Left ventricle myocardium superior (tissue), 1 donor: ENCODE measurements at regions of chr12 and their contacts with region 1.

Region 1: GRCh38 chr12:39692258-39692853 is 72.8 kb upstream of the ABCD2 start:
- DNase-seq: no peak
- ATAC-seq: no peak

Region 2: GRCh38 chr12:39319187-39319586 is 373.2 kb before region 1 on chr12:
- intact Hi-C with region 1: loop called (anchors 10 kb)
- DNase-seq: no peak
- ATAC-seq: no peak

Region 3: DNA sequence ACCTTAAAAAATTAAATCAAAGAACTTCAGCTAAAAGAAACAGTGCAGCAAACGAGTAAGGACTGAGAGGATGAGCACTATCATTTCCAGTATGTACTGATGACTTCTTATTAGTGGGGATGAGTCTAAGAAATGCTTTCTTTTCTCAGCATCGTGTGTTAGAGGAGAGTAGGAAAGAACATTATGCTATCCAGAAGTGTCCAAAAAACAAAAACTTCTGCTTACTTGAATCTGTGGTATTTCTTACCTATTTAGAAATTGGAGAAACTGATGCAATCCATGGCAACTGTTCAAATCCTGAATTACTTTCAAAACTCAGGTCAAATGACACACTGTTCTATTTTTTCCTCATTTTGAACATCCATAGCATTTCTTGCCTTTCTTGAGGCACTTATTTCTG is 96.4 kb before region 1 on chr12:
- intact Hi-C with region 1: loop called (anchors 10 kb)
- DNase-seq: no peak
- ATAC-seq: no peak

Region 4: GRCh38 chr12:40829738-40830144 is 1137.4 kb after region 1 on chr12:
- intact Hi-C with region 1: no loop called
- DNase-seq: no peak
- ATAC-seq: no peak